MCF 10A (cell line): ENCODE measurements at regions of chr12 and their contacts with region 1.

Region 1: DNA sequence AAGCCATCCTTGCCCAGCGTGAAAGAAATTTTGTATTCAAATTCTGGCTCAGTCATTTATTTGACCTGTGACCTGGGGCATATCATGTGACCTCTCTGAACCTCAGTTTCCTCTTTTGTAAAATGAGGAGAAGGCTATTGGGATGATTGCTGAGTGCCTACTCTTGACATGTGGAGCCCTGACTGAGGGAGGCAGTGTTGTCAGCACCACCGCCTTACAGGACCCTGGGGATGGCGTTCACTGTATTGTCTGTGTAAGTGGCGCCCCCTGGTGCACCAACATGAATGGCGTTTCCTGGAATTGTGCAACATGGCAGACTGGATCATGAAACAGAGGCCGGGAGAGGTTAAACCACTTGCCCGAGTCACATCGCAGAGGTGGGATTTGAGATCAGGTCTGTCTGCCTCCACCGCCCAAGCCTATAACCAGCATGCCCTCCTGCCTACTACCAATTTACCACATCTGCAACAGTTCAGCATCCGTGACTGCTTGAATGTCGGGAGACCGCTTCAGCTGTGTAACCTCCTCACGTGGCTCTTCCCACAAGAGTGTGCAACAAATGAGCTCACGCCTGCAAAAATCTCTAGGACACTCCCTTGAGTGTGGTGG is 20.1 kb upstream of the CCDC63 start:
- DNase-seq: peak; percentile 92
- H3K4me3 Mint-ChIP-seq: no peak overlapping the region
- H3K27ac Mint-ChIP-seq: no peak overlapping the region
- H3K4me1 Mint-ChIP-seq: peaks cover 6% of the 10 kb centered on the region
- H3K27me3 Mint-ChIP-seq: peaks cover 8% of the 10 kb centered on the region
- CTCF ChIP-seq: peak; percentile 87

Region 2: DNA sequence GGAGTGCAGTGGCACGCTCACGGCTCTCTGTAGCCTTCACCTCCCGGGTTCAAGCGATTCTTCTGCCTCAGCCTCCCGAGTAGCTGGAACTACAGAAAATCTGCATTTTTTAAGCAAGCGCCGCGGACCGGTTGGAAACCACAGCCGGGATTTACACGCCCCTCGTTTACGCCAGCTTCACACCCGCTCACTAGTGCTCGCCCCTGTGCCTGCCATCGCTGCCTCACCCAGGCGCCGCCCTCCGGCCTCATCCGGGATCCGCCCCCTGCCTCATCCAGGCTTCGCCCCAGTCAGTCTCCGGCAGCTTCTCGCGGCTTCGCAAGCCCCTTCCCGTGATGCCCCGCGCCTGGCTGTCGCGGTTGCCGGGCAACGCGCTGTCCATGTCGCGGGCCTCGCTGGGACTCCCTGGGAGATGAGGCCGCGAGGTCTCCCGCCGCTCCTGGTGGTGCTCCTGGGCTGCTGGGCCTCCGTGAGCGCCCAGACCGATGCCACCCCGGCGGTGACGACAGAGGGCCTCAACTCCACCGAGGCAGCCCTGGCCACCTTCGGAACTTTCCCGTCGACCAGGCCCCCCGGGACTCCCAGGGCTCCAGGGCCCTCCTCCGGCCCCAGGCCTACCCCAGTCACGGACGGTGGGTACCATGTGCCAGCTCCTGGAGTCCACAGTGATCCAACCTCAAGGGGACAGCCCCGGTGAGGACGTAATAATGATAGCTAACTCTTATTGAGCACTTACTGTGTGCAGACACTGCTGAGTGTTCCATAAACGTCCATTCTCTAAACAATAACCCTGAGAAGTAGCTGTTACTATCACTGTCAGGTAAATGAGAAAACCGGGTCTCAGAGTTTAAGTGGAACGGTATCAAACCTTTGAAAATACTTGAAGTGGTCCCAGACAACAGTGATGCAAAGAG is 212.7 kb before region 1 on chr12 and contains the start of gene TCTN1:
- CTCF ChIA-PET with region 1: interaction called, 3 read pairs
- POLR2A ChIA-PET with region 1: no interaction called
- intact Hi-C with region 1: loop called (anchors 1 kb)
- DNase-seq: peak; percentile 92
- H3K4me3 Mint-ChIP-seq: peak within 1 kb of the TSS; percentile 78
- H3K27ac Mint-ChIP-seq: peak within 1 kb of the TSS; percentile 66
- H3K4me1 Mint-ChIP-seq: no peaks in the 10 kb centered on the region
- H3K27me3 Mint-ChIP-seq: no peaks in the 10 kb centered on the region
- CTCF ChIP-seq: no peak
- total RNA-seq, gene TCTN1: 36.5 and 38.9 TPM in 2 replicates

Region 3: GRCh38 chr12:110704748-110705147 is 121.9 kb before region 1 on chr12:
- CTCF ChIA-PET with region 1: interaction called, 3 read pairs
- POLR2A ChIA-PET with region 1: no interaction called
- intact Hi-C with region 1: loop called (anchors 2 kb)
- DNase-seq: peak; percentile 46
- H3K4me3 Mint-ChIP-seq: no peak overlapping the region
- H3K27ac Mint-ChIP-seq: no peak overlapping the region
- H3K4me1 Mint-ChIP-seq: no peaks in the 10 kb centered on the region
- H3K27me3 Mint-ChIP-seq: no peaks in the 10 kb centered on the region
- CTCF ChIP-seq: peak; percentile 30

Region 4: DNA sequence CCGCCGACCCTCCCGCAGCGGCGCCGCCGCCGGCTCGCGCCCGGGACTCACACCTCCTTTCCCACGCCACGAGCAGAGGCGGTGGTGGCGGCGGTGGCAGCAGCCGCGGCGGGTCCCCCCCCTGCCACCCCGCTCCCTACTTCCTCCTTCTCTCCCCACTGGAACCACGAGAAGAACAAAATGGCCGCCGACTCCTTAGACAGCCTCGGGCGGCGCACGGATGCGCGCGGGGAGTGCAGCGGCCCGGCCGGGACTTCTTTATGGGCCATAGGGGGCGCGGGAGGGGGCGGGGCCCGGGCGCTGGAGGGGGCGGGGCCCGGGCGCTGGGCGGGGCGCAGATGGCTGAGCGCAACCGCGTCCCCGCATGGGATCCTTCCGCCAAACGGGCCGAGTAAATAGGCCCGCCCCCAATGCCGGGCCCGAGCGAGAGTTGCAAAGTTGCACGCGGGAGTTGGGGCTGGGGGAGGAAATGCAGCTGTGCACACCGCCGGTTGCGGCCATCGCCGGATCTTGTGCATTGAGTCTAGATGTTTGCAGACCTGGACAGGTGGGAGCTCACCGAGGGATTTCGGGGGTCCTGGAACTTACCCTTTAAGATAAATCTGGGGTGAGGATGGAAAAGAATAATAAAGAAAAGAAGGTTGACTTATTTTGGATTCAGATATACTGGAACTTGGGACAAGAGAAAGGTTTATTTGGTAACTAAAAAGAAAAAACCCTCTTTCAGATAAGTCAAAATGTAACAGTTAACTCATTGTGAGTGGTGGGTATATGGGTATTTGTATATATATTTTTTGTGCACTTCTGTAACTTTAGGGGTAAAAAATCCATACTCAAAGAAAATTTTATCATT is 83.8 kb before region 1 on chr12 and contains the start of gene PPP1CC:
- CTCF ChIA-PET with region 1: interaction called, 4 read pairs
- POLR2A ChIA-PET with region 1: no interaction called
- intact Hi-C with region 1: loop called (anchors 1 kb)
- DNase-seq: peak; percentile 95
- H3K4me3 Mint-ChIP-seq: peak within 1 kb of the TSS; percentile 96
- H3K27ac Mint-ChIP-seq: peak within 1 kb of the TSS; percentile 75
- H3K4me1 Mint-ChIP-seq: peaks cover 39% of the 10 kb centered on the region
- H3K27me3 Mint-ChIP-seq: no peaks in the 10 kb centered on the region
- CTCF ChIP-seq: no peak
- total RNA-seq, gene PPP1CC: 79.4 and 94.6 TPM in 2 replicates

Region 5: GRCh38 chr12:110888256-110888991 is 61.7 kb after region 1 on chr12:
- CTCF ChIA-PET with region 1: interaction called, 4 read pairs
- POLR2A ChIA-PET with region 1: no interaction called
- intact Hi-C with region 1: loop called (anchors 1 kb)
- DNase-seq: no peak
- H3K4me3 Mint-ChIP-seq: peak overlapping the region; percentile 86
- H3K27ac Mint-ChIP-seq: peak overlapping the region; percentile 35
- H3K4me1 Mint-ChIP-seq: peaks cover 9% of the 10 kb centered on the region
- H3K27me3 Mint-ChIP-seq: peaks cover 17% of the 10 kb centered on the region
- CTCF ChIP-seq: no peak